Activated CD4-positive, alpha-beta T cell treated with anti-CD3 and anti-CD28 coated beads, Interleukin-2, amount 10 ng/mL, durations not matched to agents 7 days and 5 days (primary cell): ENCODE measurements at regions of chr11 and their contacts with region 1.

Region 1: DNA sequence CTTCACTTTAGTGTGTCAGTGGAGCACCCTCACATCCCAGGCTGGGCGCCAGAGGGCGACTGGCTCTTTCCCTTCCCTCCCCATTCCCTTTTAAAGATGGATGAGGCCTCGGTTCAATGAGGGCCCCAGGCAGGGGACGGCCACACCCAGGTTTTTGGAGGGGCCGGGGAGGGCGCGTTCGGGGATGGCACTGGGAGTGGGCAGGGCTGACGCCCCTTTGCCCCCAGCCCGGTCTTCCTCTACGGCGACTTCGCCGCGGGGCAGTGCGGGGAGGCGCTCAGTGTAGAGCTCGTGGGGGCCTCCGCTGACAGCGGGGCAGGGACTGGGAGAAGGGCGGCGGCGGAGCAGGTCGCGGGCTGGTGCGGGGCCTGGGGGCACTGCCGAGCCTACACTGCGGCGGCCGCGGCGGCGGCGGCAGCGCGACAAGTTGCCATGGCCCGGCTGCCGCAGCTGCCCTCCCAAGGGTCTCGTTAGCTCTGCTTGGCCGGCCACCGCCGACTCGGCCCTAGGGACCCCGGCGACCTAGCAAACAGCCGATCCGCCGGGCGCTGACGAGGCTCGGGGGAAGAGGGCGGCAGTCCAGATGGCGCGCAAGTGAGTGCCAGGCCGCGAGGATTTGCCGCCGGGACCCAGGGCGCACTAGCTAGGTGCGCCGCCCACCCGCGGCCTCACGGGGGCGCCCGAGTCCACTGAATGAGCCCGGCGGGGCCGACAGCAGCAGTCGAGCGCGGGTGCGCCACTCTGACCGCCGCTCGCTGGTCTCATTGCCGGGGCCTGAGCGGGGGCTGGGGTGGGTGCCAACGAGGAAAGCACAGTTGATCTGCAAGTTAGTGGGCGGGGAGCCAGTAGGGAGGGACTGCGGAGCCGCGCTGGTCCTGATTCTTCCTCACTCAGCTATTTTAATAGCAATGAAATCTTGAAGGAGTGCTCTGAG is 92.7 kb downstream of the RRM1 start:
- DNase-seq: peak; percentile 86
- H3K4me3 Mint-ChIP-seq: peak overlapping the region; percentile 66
- H3K27ac Mint-ChIP-seq: no peak overlapping the region
- H3K4me1 Mint-ChIP-seq: peaks cover 24% of the 10 kb centered on the region
- H3K27me3 Mint-ChIP-seq: no peaks in the 10 kb centered on the region

Region 2: GRCh38 chr11:4493480-4493818 is 306.1 kb after region 1 on chr11:
- CTCF ChIA-PET with region 1: interaction called, 33 read pairs
- POLR2A ChIA-PET with region 1: no interaction called
- DNase-seq: no peak
- H3K4me3 Mint-ChIP-seq: no peak overlapping the region
- H3K27ac Mint-ChIP-seq: no peak overlapping the region
- H3K4me1 Mint-ChIP-seq: peaks cover 5% of the 10 kb centered on the region
- H3K27me3 Mint-ChIP-seq: peaks cover 13% of the 10 kb centered on the region

Region 3: GRCh38 chr11:4539603-4540219 is 352.4 kb after region 1 on chr11:
- CTCF ChIA-PET with region 1: interaction called, 26 read pairs
- POLR2A ChIA-PET with region 1: no interaction called
- DNase-seq: peak; percentile 57
- H3K4me3 Mint-ChIP-seq: no peak overlapping the region
- H3K27ac Mint-ChIP-seq: no peak overlapping the region
- H3K4me1 Mint-ChIP-seq: no peaks in the 10 kb centered on the region
- H3K27me3 Mint-ChIP-seq: peaks cover 13% of the 10 kb centered on the region